ENCODE measurements at regions of chr11 and their contacts with region 1.

Region 1: DNA sequence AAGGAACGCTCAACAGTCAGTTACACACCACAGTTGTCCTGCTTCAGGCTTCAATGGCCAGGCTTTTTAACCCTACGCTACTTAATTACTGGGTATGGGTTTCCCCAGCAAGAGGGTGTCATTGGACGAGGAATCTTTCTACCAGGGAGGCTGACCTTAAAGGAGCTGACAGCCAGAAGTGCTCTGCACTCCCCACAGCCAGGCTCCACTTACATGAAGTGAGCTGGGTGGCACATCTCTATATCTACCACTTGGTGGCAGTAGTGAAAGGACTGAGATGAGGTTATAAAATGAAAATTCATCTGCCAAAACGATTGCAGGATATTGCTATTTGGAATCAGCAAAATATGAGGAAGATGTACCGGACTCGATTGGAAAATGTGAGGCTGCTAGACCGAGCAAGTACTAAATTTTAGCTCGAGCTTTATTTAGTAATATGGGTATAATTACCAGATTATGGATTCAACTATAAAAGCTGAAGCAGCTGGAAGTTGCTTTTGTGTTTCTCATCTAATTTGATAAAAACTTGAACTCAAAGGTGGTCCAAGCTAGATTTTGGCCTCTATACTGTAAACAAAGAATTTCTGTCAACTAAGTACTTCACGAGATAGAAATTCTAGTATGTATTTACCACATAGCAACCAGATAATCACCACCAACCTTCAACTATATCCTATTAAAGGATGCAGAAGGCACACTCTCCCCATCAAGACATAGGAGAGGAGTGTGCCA is 53.9 kb upstream of the CEP126 start:
- DNase-seq: peak; percentile 37 to 70
- ATAC-seq: peak; percentile 93
- H3K4me3 ChIP-seq: no peak overlapping the region
- H3K27ac ChIP-seq: peak overlapping the region; percentile 72 to 82; a peak in 5 of 6 replicates
- H3K4me1 ChIP-seq: peaks cover 29% of the 10 kb centered on the region
- CTCF ChIP-seq: peak; percentile 65
- EP300 ChIP-seq: no peak
- POLR2A ChIP-seq: no peak
- RAD21 ChIP-seq: peak; percentile 75 to 77

Region 2: DNA sequence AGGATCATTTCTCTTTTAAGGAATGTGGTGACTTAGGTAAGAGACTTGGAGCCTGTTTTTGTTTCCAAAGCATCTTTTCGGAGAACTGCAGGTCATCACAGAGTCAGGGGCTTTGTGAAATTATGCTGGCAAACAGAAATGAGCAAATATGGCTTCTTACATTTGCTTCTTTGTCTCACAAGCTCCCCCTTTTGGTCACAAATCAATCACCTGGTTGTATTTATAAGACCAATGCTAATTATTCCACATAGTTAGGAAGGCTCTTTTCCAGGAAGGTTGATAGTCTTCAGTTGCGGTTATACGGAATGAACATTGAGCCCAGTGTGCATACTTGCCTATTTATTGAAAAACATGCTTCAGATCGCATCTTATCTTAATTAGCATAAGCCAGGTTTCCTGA is 19.4 kb after region 1 on chr11:
- CTCF ChIA-PET with region 1: interaction called, 87 read pairs
- POLR2A ChIA-PET with region 1: no interaction called
- DNase-seq: peak in 1 of 2 experiments; percentile 81
- ATAC-seq: peak in 1 of 2 experiments; percentile 62; a peak in 2 of 6 replicates
- H3K4me3 ChIP-seq: no peak overlapping the region
- H3K27ac ChIP-seq: peak overlapping the region; percentile 20 to 59; a peak in 3 of 6 replicates
- H3K4me1 ChIP-seq: no peaks in the 10 kb centered on the region
- CTCF ChIP-seq: peak; percentile 48
- EP300 ChIP-seq: no peak
- POLR2A ChIP-seq: no peak
- RAD21 ChIP-seq: peak; percentile 43 to 65

Region 3: GRCh38 chr11:101974255-101974654 is 113.4 kb after region 1 on chr11:
- CTCF ChIA-PET with region 1: interaction called, 28 read pairs
- POLR2A ChIA-PET with region 1: no interaction called
- DNase-seq: peak in 1 of 2 experiments; percentile 55
- ATAC-seq: peak; percentile 47 to 88; a peak in 5 of 6 replicates
- H3K4me3 ChIP-seq: no peak overlapping the region
- H3K27ac ChIP-seq: peak overlapping the region in 1 of 2 experiments; percentile 52; a peak in 2 of 6 replicates
- H3K4me1 ChIP-seq: peaks cover 15% of the 10 kb centered on the region; the same call in 2 of the 3 replicates
- CTCF ChIP-seq: peak; percentile 52
- EP300 ChIP-seq: no peak
- POLR2A ChIP-seq: no peak
- RAD21 ChIP-seq: peak; percentile 68 to 74